H1 (cell line): ENCODE measurements at regions of chr3 and their contacts with region 1.

Region 1: DNA sequence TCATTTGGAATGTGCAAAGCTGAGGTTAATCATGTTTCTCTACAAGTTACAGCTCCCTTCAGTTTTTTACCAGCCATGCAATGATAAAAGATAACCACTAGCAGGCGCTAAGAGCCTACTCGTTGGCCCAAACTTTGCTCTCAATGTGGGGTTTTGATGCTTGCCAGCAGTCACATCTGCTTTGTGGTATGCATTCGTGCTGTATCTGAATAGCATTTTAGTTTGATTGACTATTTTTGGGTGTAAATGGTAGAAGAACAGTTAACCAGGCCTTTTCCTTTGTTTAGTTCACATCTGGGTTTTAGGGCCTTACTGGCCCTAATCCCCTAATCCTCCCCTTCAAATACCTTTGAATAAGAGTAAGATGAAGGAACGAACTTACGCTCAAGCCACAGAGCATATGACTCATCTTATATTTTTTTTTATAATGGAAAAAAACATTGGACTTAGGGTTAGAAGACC is 4.4 kb upstream of the CLDN11 start:
- DNase-seq: no peak
- H3K4me3 ChIP-seq: no peak overlapping the region
- H3K27ac ChIP-seq: no peak overlapping the region
- H3K4me1 ChIP-seq: peaks cover 0 to 5% (median 4%) of the 10 kb centered on the region in 4 experiments; a peak in 6 of 7 replicates
- H3K27me3 ChIP-seq: peaks cover 5 to 18% (median 16%) of the 10 kb centered on the region in 4 experiments
- CTCF ChIP-seq: peak; percentile 39 to 95 (median 94)
- EP300 ChIP-seq: no peak
- POLR2A ChIP-seq: no peak
- RAD21 ChIP-seq: peak; percentile 98 to 99

Region 2: GRCh38 chr3:170307671-170308403 is 106.4 kb before region 1 on chr3:
- CTCF ChIA-PET with region 1: interaction called, 17 read pairs
- POLR2A ChIA-PET with region 1: no interaction called
- DNase-seq: no peak
- H3K4me3 ChIP-seq: no peak overlapping the region
- H3K27ac ChIP-seq: no peak overlapping the region
- H3K4me1 ChIP-seq: no peaks in the 10 kb centered on the region
- H3K27me3 ChIP-seq: no peaks in the 10 kb centered on the region
- CTCF ChIP-seq: no peak
- EP300 ChIP-seq: no peak
- POLR2A ChIP-seq: no peak
- RAD21 ChIP-seq: no peak

Region 3: GRCh38 chr3:170425491-170426239 is 11.4 kb after region 1 on chr3:
- CTCF ChIA-PET with region 1: interaction called, 15 read pairs
- POLR2A ChIA-PET with region 1: no interaction called
- DNase-seq: no peak
- H3K4me3 ChIP-seq: no peak overlapping the region
- H3K27ac ChIP-seq: no peak overlapping the region
- H3K4me1 ChIP-seq: peaks cover 0 to 9% (median 0%) of the 10 kb centered on the region in 4 experiments; a peak in 2 of 7 replicates
- H3K27me3 ChIP-seq: peaks cover 0 to 6% (median under 1%) of the 10 kb centered on the region in 4 experiments; a peak in 6 of 7 replicates
- CTCF ChIP-seq: no peak
- EP300 ChIP-seq: no peak
- POLR2A ChIP-seq: no peak
- RAD21 ChIP-seq: no peak

Region 4: GRCh38 chr3:170458285-170458684 is 44.1 kb after region 1 on chr3:
- CTCF ChIA-PET with region 1: interaction called, 17 read pairs
- POLR2A ChIA-PET with region 1: no interaction called
- DNase-seq: peak in 1 of 2 experiments; percentile 24
- H3K4me3 ChIP-seq: no peak overlapping the region
- H3K27ac ChIP-seq: no peak overlapping the region
- H3K4me1 ChIP-seq: no peaks in the 10 kb centered on the region
- H3K27me3 ChIP-seq: no peaks in the 10 kb centered on the region
- CTCF ChIP-seq: no peak
- EP300 ChIP-seq: no peak
- POLR2A ChIP-seq: no peak
- RAD21 ChIP-seq: no peak

Region 5: GRCh38 chr3:170689893-170690660 is 275.8 kb after region 1 on chr3:
- CTCF ChIA-PET with region 1: interaction called, 33 read pairs
- POLR2A ChIA-PET with region 1: no interaction called
- DNase-seq: peak in 1 of 2 experiments; percentile 88
- H3K4me3 ChIP-seq: no peak overlapping the region
- H3K27ac ChIP-seq: no peak overlapping the region
- H3K4me1 ChIP-seq: peaks cover 3 to 7% (median 4%) of the 10 kb centered on the region in 4 experiments; a peak in 4 of 7 replicates
- H3K27me3 ChIP-seq: no peaks in the 10 kb centered on the region
- CTCF ChIP-seq: peak; percentile 75 to 89 (median 80)
- EP300 ChIP-seq: no peak
- POLR2A ChIP-seq: no peak
- RAD21 ChIP-seq: peak; percentile 79 to 85

Region 6: GRCh38 chr3:170848292-170848917 is 434.2 kb after region 1 on chr3:
- CTCF ChIA-PET with region 1: interaction called, 11 read pairs
- POLR2A ChIA-PET with region 1: no interaction called
- DNase-seq: no peak
- H3K4me3 ChIP-seq: no peak overlapping the region
- H3K27ac ChIP-seq: no peak overlapping the region
- H3K4me1 ChIP-seq: no peaks in the 10 kb centered on the region
- H3K27me3 ChIP-seq: no peaks in the 10 kb centered on the region
- CTCF ChIP-seq: no peak
- EP300 ChIP-seq: no peak
- POLR2A ChIP-seq: no peak
- RAD21 ChIP-seq: peak in 1 of 2 experiments; percentile 24; a peak in 2 of 4 replicates